ENCODE measurements at regions of chr1 and their contacts with region 1.

Region 1: GRCh38 chr1:38026592-38027200 is 14.2 kb downstream of the UTP11 start:
- DNase-seq: no peak
- H3K4me3 ChIP-seq: no peak overlapping the region
- H3K27me3 ChIP-seq: no peaks in the 10 kb centered on the region
- CTCF ChIP-seq: peak; percentile 73

Region 2: DNA sequence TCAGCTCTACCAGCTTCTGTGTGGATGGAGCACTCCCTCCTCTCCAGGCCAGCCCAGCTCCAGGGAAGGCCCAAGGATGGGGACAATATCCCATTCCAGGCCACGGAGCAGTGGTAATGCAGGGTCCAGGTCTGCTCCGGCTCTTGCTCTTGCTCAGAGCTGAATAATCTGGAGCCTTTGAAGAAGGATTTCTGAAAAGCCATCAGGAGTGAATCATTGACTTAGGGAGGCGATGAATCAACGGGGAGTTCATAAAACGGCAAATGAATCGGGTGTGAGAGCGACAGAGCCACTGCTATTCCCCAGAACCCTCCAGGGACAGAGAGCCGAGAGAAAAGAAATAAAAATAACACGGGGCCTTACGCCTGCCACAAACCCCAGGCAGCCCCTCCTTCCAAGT is 12.2 kb after region 1 on chr1:
- CTCF ChIA-PET with region 1: interaction called, 10 read pairs
- POLR2A ChIA-PET with region 1: no interaction called
- DNase-seq: no peak
- H3K4me3 ChIP-seq: no peak overlapping the region
- H3K27me3 ChIP-seq: peaks cover 27% of the 10 kb centered on the region
- CTCF ChIP-seq: no peak

Measured in BJ (cell line).